ENCODE measurements at regions of chr11 and their contacts with region 1.

Region 1: GRCh38 chr11:76919887-76920746 is 59.4 kb downstream of the ACER3 start:
- DNase-seq: peak; percentile 20 to 82 (median 54)
- ATAC-seq: peak; percentile 76
- H3K4me3 ChIP-seq: peak overlapping the region; percentile 34 to 56
- H3K4me3 Mint-ChIP-seq: peak overlapping the region; percentile 77
- H3K27ac ChIP-seq: no peak overlapping the region
- H3K27ac Mint-ChIP-seq: no peak overlapping the region
- H3K4me1 ChIP-seq: peaks cover 7% of the 10 kb centered on the region
- H3K4me1 Mint-ChIP-seq: peaks cover 8% of the 10 kb centered on the region
- H3K27me3 ChIP-seq: no peaks in the 10 kb centered on the region
- H3K27me3 Mint-ChIP-seq: no peaks in the 10 kb centered on the region
- CTCF ChIP-seq: peak; percentile 79

Region 2: GRCh38 chr11:76185931-76186401 is 734.2 kb before region 1 on chr11:
- CTCF ChIA-PET with region 1: no interaction called
- POLR2A ChIA-PET with region 1: no interaction called
- intact Hi-C with region 1: no loop called
- DNase-seq: no peak
- ATAC-seq: no peak
- H3K4me3 ChIP-seq: no peak overlapping the region
- H3K4me3 Mint-ChIP-seq: no peak overlapping the region
- H3K27ac ChIP-seq: no peak overlapping the region
- H3K27ac Mint-ChIP-seq: no peak overlapping the region
- H3K4me1 ChIP-seq: no peaks in the 10 kb centered on the region
- H3K4me1 Mint-ChIP-seq: no peaks in the 10 kb centered on the region
- H3K27me3 ChIP-seq: no peaks in the 10 kb centered on the region
- H3K27me3 Mint-ChIP-seq: no peaks in the 10 kb centered on the region
- CTCF ChIP-seq: no peak

Region 3: GRCh38 chr11:76721755-76722677 is 198.1 kb before region 1 on chr11:
- CTCF ChIA-PET with region 1: interaction called, 13 read pairs
- POLR2A ChIA-PET with region 1: no interaction called
- intact Hi-C with region 1: no loop called
- DNase-seq: peak; percentile 41 to 83 (median 74)
- ATAC-seq: peak; percentile 98
- H3K4me3 ChIP-seq: no peak overlapping the region
- H3K4me3 Mint-ChIP-seq: peak overlapping the region; percentile 20
- H3K27ac ChIP-seq: no peak overlapping the region
- H3K27ac Mint-ChIP-seq: no peak overlapping the region
- H3K4me1 ChIP-seq: no peaks in the 10 kb centered on the region
- H3K4me1 Mint-ChIP-seq: peaks cover 6% of the 10 kb centered on the region
- H3K27me3 ChIP-seq: peaks cover 0 to 3% of the 10 kb centered on the region in 2 experiments
- H3K27me3 Mint-ChIP-seq: peaks cover 8% of the 10 kb centered on the region
- CTCF ChIP-seq: peak; percentile 80

Region 4: GRCh38 chr11:76734456-76735420 is 185.4 kb before region 1 on chr11:
- CTCF ChIA-PET with region 1: interaction called, 6 read pairs
- POLR2A ChIA-PET with region 1: no interaction called
- intact Hi-C with region 1: loop called in 1 of 2 experiments (anchors 5 kb)
- DNase-seq: no peak
- ATAC-seq: no peak
- H3K4me3 ChIP-seq: no peak overlapping the region
- H3K4me3 Mint-ChIP-seq: no peak overlapping the region
- H3K27ac ChIP-seq: no peak overlapping the region
- H3K27ac Mint-ChIP-seq: no peak overlapping the region
- H3K4me1 ChIP-seq: no peaks in the 10 kb centered on the region
- H3K4me1 Mint-ChIP-seq: no peaks in the 10 kb centered on the region
- H3K27me3 ChIP-seq: no peaks in the 10 kb centered on the region
- H3K27me3 Mint-ChIP-seq: peaks cover 4% of the 10 kb centered on the region
- CTCF ChIP-seq: no peak

Region 5: DNA sequence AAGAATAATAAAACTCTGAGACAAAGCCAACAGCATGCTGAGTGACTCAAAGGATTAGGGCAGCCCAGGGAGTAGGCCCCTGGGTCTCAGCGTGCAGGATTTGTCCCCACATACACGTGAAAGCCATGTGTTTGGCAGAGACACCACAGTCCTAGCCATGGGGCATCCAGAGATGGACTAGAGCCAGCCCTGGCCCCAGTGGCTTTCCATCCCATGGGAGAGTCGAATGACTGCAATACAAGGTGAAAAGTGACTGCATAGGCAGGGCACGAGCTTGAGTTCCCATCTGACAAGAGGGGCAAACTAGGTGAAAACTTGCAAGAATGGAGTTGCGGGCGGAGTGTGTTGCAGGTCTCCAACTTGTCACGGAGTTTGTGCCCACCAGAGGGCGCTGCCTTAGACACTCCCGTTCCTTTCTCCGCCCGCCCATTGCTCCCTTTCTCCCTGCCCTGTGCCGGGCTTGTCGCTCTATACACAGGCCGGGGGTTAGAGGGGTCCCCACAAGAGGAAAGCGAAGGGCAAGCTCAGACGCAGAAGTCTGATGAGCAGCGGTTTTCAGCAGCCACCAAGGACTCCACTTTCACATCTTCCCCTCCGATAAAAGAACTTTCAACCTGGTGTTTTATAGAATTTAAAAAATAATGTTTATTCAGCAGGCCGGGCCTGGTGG is 112.8 kb before region 1 on chr11:
- CTCF ChIA-PET with region 1: interaction called, 29 read pairs
- POLR2A ChIA-PET with region 1: no interaction called
- intact Hi-C with region 1: loop called (anchors 1 to 2 kb)
- DNase-seq: peak; percentile 25 to 74 (median 66)
- ATAC-seq: peak; percentile 48
- H3K4me3 ChIP-seq: no peak overlapping the region
- H3K4me3 Mint-ChIP-seq: no peak overlapping the region
- H3K27ac ChIP-seq: no peak overlapping the region
- H3K27ac Mint-ChIP-seq: peak overlapping the region; percentile 32
- H3K4me1 ChIP-seq: peaks cover 18% of the 10 kb centered on the region
- H3K4me1 Mint-ChIP-seq: peaks cover 27% of the 10 kb centered on the region
- H3K27me3 ChIP-seq: peaks cover 0 to 11% of the 10 kb centered on the region in 2 experiments
- H3K27me3 Mint-ChIP-seq: peaks cover 21% of the 10 kb centered on the region
- CTCF ChIP-seq: peak; percentile 68

Region 6: GRCh38 chr11:76860539-76861475 is 59.3 kb before region 1 on chr11 and contains the start of gene ACER3:
- CTCF ChIA-PET with region 1: interaction called, 4 read pairs
- POLR2A ChIA-PET with region 1: no interaction called
- intact Hi-C with region 1: loop called in 1 of 2 experiments (anchors 2 kb)
- DNase-seq: peak; percentile 38 to 92 (median 76)
- ATAC-seq: peak; percentile 96
- H3K4me3 ChIP-seq: peak within 1 kb of the TSS; percentile 63 to 82
- H3K4me3 Mint-ChIP-seq: peak within 1 kb of the TSS; percentile 90
- H3K27ac ChIP-seq: peak within 1 kb of the TSS; percentile 37 to 60
- H3K27ac Mint-ChIP-seq: peak within 1 kb of the TSS; percentile 87
- H3K4me1 ChIP-seq: peaks cover 21% of the 10 kb centered on the region
- H3K4me1 Mint-ChIP-seq: peaks cover 31% of the 10 kb centered on the region
- H3K27me3 ChIP-seq: no peaks in the 10 kb centered on the region
- H3K27me3 Mint-ChIP-seq: no peaks in the 10 kb centered on the region
- CTCF ChIP-seq: no peak
- total RNA-seq, gene ACER3: 5.0 to 5.8 TPM

Region 7: GRCh38 chr11:77039491-77040400 is 119.6 kb after region 1 on chr11:
- CTCF ChIA-PET with region 1: interaction called, 4 read pairs
- POLR2A ChIA-PET with region 1: no interaction called
- intact Hi-C with region 1: loop called in 1 of 2 experiments (anchors 5 kb)
- DNase-seq: peak in 2 of 9 experiments; percentile 25 to 42
- ATAC-seq: peak; percentile 49
- H3K4me3 ChIP-seq: no peak overlapping the region
- H3K4me3 Mint-ChIP-seq: peak overlapping the region; percentile 54
- H3K27ac ChIP-seq: no peak overlapping the region
- H3K27ac Mint-ChIP-seq: no peak overlapping the region
- H3K4me1 ChIP-seq: peaks cover 5% of the 10 kb centered on the region
- H3K4me1 Mint-ChIP-seq: peaks cover 8% of the 10 kb centered on the region
- H3K27me3 ChIP-seq: peaks cover 5 to 12% of the 10 kb centered on the region in 2 experiments
- H3K27me3 Mint-ChIP-seq: peaks cover 52% of the 10 kb centered on the region
- CTCF ChIP-seq: no peak